GM12878 (cell line): ENCODE measurements at regions of chr22 and their contacts with region 1.

Region 1: GRCh38 chr22:29625090-29625825 is 21.8 kb downstream of the NF2 start:
- DNase-seq: no peak
- ATAC-seq: peak; percentile 79
- H3K4me3 ChIP-seq: no peak overlapping the region
- H3K27ac ChIP-seq: no peak overlapping the region
- H3K4me1 ChIP-seq: peaks cover 5% of the 10 kb centered on the region; the same call in 1 of the 2 replicates
- H3K27me3 ChIP-seq: no peaks in the 10 kb centered on the region
- CTCF ChIP-seq: peak; percentile 74 to 93 (median 87)
- EP300 ChIP-seq: no peak
- POLR2A ChIP-seq: no peak
- RAD21 ChIP-seq: peak; percentile 58; the same call in 1 of the 2 replicates

Region 2: GRCh38 chr22:28841111-28841510 is 784.1 kb before region 1 on chr22:
- CTCF ChIA-PET with region 1: no interaction called
- POLR2A ChIA-PET with region 1: no interaction called
- RAD21 ChIA-PET with region 1: no interaction called
- SMC1A ChIA-PET with region 1: no interaction called
- in situ Hi-C with region 1: no loop called
- intact Hi-C with region 1: no loop called
- DNase-seq: no peak
- ATAC-seq: no peak
- H3K4me3 ChIP-seq: no peak overlapping the region
- H3K27ac ChIP-seq: no peak overlapping the region
- H3K4me1 ChIP-seq: no peaks in the 10 kb centered on the region
- H3K27me3 ChIP-seq: no peaks in the 10 kb centered on the region
- CTCF ChIP-seq: no peak
- EP300 ChIP-seq: no peak
- POLR2A ChIP-seq: no peak
- RAD21 ChIP-seq: no peak

Region 3: GRCh38 chr22:29587938-29588699 is 37.1 kb before region 1 on chr22:
- CTCF ChIA-PET with region 1: interaction called, 28 read pairs
- POLR2A ChIA-PET with region 1: no interaction called
- RAD21 ChIA-PET with region 1: interaction called, 4 read pairs
- SMC1A ChIA-PET with region 1: interaction called, 3 read pairs
- in situ Hi-C with region 1: no loop called
- intact Hi-C with region 1: no loop called
- DNase-seq: no peak
- ATAC-seq: peak; percentile 19; the same call in 1 of the 3 replicates
- H3K4me3 ChIP-seq: no peak overlapping the region
- H3K27ac ChIP-seq: no peak overlapping the region
- H3K4me1 ChIP-seq: no peaks in the 10 kb centered on the region
- H3K27me3 ChIP-seq: no peaks in the 10 kb centered on the region
- CTCF ChIP-seq: no peak
- EP300 ChIP-seq: no peak
- POLR2A ChIP-seq: no peak
- RAD21 ChIP-seq: no peak

Region 4: DNA sequence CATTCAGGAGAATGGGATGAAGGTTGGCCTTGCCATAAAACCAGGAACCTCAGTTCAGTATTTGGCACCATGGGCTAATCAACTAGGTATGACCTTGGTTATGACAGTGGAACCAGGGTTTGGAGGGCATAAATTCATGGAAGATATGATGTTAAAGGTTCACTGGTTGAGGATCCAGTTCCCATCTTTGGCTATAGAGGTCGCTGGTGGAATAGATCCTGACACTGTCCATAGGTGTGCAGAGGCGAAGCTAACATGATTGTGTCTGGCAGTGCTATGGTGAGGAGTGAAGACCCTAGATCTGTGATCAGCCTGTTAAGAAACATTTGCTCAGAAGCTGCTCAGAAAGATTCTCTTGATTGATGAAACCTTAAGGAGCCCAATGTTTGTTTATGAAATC is 16.1 kb before region 1 on chr22:
- CTCF ChIA-PET with region 1: interaction called, 34 read pairs
- POLR2A ChIA-PET with region 1: interaction called, 3 read pairs
- RAD21 ChIA-PET with region 1: interaction called, 8 read pairs
- SMC1A ChIA-PET with region 1: interaction called, 23 read pairs
- in situ Hi-C with region 1: no loop called
- intact Hi-C with region 1: no loop called
- DNase-seq: no peak
- ATAC-seq: no peak; the same call in 2 of the 3 replicates
- H3K4me3 ChIP-seq: no peak overlapping the region
- H3K27ac ChIP-seq: no peak overlapping the region
- H3K4me1 ChIP-seq: no peaks in the 10 kb centered on the region; the same call in 1 of the 2 replicates
- H3K27me3 ChIP-seq: no peaks in the 10 kb centered on the region
- CTCF ChIP-seq: 0 out of 6 replicates have a peak, but pooled peaks of 2 of the 3 experiments have one; percentile 5 to 12
- EP300 ChIP-seq: no peak
- POLR2A ChIP-seq: no peak
- RAD21 ChIP-seq: no peak

Region 5: DNA sequence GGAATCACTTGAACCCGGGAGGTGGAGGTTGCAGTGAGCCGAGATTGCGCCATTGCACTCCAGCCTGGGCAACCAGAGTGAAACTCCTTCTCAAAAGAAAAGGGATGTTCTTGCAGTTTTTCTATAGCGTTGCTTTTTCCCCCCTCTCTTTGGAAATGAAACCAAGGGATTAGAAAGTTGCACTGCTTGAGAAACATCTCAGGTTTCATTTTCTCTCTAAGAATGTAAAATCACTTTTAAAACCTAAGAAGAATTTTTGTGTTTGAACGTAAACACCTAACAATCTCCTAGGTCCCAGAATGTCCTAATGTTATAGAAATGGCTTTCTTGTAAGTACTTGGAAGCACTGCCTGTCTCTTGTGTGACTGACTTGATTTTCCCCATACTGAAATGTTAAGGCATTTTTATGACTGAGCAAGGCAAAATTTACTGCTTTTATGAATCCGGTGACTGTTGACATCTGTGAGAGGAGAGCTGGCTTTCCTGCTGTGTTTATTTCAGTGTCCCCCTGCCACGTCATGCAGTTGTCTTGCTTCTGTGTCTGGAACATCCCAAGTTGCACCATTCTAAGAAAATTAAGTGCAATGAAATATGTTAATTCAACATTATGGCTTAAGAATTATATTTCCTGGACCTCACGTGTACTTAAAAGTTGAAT is 15.9 kb after region 1 on chr22:
- CTCF ChIA-PET with region 1: interaction called, 46 read pairs
- POLR2A ChIA-PET with region 1: no interaction called
- RAD21 ChIA-PET with region 1: interaction called, 5 read pairs
- SMC1A ChIA-PET with region 1: interaction called, 9 read pairs
- in situ Hi-C with region 1: no loop called
- intact Hi-C with region 1: no loop called
- DNase-seq: no peak
- ATAC-seq: no peak
- H3K4me3 ChIP-seq: no peak overlapping the region
- H3K27ac ChIP-seq: no peak overlapping the region
- H3K4me1 ChIP-seq: peaks cover 22% of the 10 kb centered on the region
- H3K27me3 ChIP-seq: no peaks in the 10 kb centered on the region
- CTCF ChIP-seq: no peak
- EP300 ChIP-seq: no peak
- POLR2A ChIP-seq: no peak
- RAD21 ChIP-seq: no peak

Region 6: GRCh38 chr22:30089655-30089974 is 464.4 kb after region 1 on chr22:
- CTCF ChIA-PET with region 1: interaction called, 15 read pairs
- POLR2A ChIA-PET with region 1: no interaction called
- RAD21 ChIA-PET with region 1: interaction called, 6 read pairs
- SMC1A ChIA-PET with region 1: interaction called, 15 read pairs
- in situ Hi-C with region 1: loop called (anchors 5 kb)
- intact Hi-C with region 1: no loop called
- DNase-seq: no peak
- ATAC-seq: no peak
- H3K4me3 ChIP-seq: no peak overlapping the region
- H3K27ac ChIP-seq: no peak overlapping the region
- H3K4me1 ChIP-seq: no peaks in the 10 kb centered on the region
- H3K27me3 ChIP-seq: no peaks in the 10 kb centered on the region
- CTCF ChIP-seq: no peak
- EP300 ChIP-seq: no peak
- POLR2A ChIP-seq: no peak
- RAD21 ChIP-seq: no peak